GM13977 (cell line): ENCODE measurements at regions of chr3 and their contacts with region 1.

Region 1: DNA sequence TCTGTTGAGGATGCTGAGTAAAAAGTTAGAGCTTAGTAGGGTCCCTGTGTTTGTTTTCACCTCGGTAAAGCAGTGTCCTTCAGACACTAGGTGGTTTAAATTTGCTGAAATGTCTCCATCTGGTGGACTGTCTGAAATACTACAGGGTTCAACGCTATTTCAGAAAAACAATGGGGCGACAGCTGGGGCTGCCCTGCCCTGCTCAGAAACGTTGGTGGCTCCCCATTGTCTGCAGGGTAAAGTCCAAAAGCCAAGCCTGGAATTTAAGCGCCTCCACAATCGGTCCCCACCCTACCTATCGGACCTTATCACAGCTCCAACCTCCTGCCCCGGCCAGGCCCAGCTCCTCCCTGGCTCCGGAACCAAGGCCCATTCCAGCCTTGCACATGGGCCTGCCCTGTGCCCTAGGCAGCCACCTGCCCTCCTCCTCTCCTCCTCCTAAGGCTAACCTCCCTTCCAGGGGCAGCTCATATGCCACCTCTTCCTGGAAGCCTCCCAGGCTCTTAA is 4.3 kb upstream of the TSEN2 start:
- DNase-seq: peak; percentile 77
- CTCF ChIP-seq: peak; percentile 64

Region 2: DNA sequence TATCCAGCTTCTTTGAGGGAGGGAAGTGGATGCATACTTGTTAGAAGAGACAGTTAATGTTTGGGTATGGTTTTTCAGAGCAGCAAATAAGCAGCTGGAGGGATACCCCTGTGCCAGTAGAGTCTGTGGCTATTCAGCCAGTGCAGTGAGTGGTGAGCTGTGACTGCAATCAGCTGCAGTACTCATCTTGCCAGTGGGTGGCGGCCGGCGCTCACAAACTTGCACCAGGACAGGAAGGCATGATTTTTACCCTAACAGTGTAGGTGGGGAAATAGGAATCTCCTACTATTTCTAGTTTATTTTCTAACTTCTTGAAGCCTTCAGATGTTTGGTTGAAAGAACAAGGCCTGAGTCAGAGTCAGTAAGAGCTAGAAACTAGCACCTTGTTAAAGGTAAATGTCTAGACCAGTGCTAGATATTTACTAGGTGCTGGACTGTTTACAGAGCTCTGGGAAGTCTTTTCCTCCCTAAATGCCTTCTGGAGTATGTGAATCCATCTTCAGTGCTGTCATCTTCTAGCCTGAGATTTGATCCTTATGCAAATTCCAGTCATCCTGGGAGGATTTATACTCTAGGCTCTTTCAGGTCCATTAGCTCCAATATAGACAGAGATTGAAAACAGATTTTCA is 344.8 kb before region 1 on chr3:
- in situ Hi-C with region 1: loop called (anchors 10 kb)
- DNase-seq: peak; percentile 47
- CTCF ChIP-seq: peak; percentile 97

Region 3: DNA sequence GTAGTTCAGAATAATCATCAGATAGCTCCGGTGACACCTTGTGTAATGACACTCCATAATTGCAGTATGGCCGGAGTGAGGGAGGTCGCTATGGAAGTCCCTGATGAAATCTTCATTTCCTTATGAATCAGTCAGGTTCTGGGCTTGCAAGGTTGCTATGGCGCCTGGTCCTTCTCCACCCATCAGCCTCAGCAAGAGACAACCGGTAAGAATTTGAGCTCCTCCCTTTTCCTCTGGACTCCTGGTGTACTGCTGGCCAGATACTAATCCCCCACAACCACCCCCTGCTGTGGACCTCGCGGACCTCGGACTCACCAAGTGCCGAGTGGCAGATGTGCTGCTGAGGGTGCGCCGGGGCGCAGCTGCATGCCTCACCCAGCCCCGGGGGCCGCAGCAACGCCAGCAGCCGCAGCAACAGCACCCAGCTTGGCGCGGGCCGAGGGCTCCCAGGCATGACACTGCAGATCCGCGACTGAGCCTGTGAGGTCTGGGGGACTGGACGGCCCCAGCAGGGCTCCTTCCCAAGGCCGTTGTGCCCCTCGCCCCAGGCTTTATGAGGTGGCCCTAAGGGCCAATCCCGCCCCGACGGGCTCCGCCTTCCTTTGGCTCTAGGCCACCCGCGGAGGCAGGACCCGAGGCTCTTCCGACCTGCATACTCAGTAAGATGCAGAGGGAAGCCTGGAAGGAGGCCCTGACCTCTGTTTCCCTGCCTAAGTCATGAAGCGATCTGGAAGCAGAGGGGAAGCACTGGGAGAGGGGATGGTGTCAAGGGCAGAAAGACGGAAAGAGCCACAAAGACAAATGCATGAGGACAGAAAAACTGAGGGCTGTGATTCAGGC is 321.4 kb before region 1 on chr3 and contains the start of gene TIMP4:
- in situ Hi-C with region 1: no loop called
- DNase-seq: no peak
- CTCF ChIP-seq: no peak